Activated CD8-positive, alpha-beta T cell treated with anti-CD3 and anti-CD28 coated beads, Interleukin-2, amount 10 ng/mL, durations not matched to agents 7 days and 5 days (primary cell): ENCODE measurements at regions of chr19 and their contacts with region 1.

Region 1: GRCh38 chr19:16382775-16383543 is 58.3 kb downstream of the KLF2 start:
- DNase-seq: peak; percentile 86
- ATAC-seq: peak; percentile 78
- H3K4me3 Mint-ChIP-seq: peak overlapping the region; percentile 31
- H3K27ac Mint-ChIP-seq: peak overlapping the region; percentile 79
- H3K4me1 Mint-ChIP-seq: peaks cover 49% of the 10 kb centered on the region
- H3K27me3 Mint-ChIP-seq: no peaks in the 10 kb centered on the region

Region 2: DNA sequence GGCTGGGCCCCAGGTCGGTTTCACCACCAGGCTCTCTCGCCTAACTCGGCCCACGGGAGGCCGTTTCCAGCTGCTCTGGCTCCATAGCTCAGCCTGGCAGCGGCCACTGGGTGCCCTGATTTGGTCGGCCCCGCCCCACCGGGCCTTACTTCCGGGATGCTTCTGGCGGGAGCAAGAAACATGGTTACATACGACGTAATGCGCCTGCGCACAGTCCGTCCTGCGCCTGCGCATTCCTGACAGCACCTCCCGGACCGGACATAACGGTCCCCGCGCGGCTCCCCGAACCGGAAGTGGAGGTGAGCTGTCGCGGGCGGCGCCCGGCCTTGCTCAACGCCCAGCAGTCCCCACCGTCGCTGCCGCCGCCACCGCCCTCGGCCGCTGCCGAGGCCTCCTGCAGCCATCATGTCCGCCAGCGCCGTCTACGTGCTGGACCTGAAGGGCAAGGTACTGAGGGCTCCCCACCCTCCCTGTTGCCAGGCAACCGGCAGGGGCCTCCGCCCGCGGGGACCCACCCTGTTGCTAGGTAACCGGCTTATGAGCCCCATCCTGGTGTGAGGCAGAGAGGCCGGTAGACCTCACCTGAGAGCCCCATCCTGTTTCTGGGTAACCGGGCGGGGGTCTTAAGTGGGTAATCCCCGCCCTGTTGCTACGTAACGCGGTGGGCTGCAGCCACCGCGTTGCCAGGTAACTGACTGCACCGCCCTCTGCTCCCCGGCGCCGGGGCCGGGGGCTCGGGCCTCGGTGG is 185.2 kb before region 1 on chr19 and contains the start of gene AP1M1:
- CTCF ChIA-PET with region 1: interaction called, 15 read pairs
- POLR2A ChIA-PET with region 1: interaction called, 3 read pairs
- DNase-seq: peak; percentile 99
- ATAC-seq: peak; percentile 93
- H3K4me3 Mint-ChIP-seq: peak within 1 kb of the TSS; percentile 97
- H3K27ac Mint-ChIP-seq: peak within 1 kb of the TSS; percentile 95
- H3K4me1 Mint-ChIP-seq: peaks cover 52% of the 10 kb centered on the region
- H3K27me3 Mint-ChIP-seq: no peaks in the 10 kb centered on the region
- total RNA-seq, gene AP1M1: 184 to 186 TPM

Region 3: GRCh38 chr19:16262618-16263017 is 120.3 kb before region 1 on chr19:
- CTCF ChIA-PET with region 1: interaction called, 13 read pairs
- POLR2A ChIA-PET with region 1: no interaction called
- DNase-seq: no peak
- ATAC-seq: no peak
- H3K4me3 Mint-ChIP-seq: peak overlapping the region; percentile 63
- H3K27ac Mint-ChIP-seq: peak overlapping the region; percentile 87
- H3K4me1 Mint-ChIP-seq: peaks cover 85% of the 10 kb centered on the region
- H3K27me3 Mint-ChIP-seq: peaks cover 24% of the 10 kb centered on the region

Region 4: DNA sequence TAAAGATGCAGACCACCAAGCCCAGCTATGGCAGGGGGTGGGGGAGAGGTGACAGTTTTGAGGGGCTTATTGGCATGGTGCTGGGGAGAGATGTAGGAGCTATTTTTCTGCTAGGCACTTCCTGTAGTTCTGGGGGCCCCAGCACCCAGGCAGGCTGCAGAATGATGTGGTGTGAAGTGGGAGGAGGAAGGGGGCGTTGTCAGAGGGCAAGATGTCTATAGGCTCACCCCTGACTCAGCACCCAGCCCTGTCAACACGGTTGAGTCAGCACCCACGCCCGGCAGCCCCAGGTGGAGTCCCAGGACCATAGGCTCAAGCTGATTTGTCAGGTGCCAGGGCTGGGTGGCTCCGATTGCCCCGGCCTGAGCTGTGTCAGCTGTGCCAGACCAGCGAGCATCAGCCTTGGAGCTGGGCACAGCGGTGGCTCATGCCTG is 52.6 kb before region 1 on chr19:
- CTCF ChIA-PET with region 1: interaction called, 70 read pairs
- POLR2A ChIA-PET with region 1: interaction called, 556 read pairs
- DNase-seq: peak; percentile 94
- ATAC-seq: peak; percentile 69
- H3K4me3 Mint-ChIP-seq: peak overlapping the region; percentile 91
- H3K27ac Mint-ChIP-seq: peak overlapping the region; percentile 82
- H3K4me1 Mint-ChIP-seq: peaks cover 64% of the 10 kb centered on the region
- H3K27me3 Mint-ChIP-seq: peaks cover 25% of the 10 kb centered on the region

Region 5: DNA sequence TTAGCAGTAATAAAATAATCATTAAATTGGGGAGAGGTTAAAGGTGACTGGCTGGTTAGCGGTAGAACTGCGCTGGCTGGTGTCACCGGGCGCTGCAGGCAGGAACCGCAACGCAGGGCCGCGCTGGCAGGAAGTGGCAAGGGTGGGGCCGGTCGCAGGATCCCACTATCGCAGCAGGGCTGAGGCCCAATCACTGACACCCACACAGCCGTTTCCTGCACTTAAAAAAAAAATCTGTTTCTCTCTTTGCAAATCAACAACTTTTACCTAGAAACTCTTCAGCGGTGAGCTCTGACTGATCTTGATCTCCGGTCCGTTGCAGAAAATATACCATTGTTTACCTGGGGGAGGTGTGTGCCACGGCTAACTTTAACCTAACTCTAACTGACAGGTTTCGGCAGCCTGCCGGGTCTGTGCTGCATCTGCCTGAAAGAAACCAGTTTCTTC is 11.4 kb before region 1 on chr19:
- CTCF ChIA-PET with region 1: interaction called, 48 read pairs
- POLR2A ChIA-PET with region 1: interaction called, 20 read pairs
- DNase-seq: peak; percentile 96
- ATAC-seq: peak; percentile 70
- H3K4me3 Mint-ChIP-seq: no peak overlapping the region
- H3K27ac Mint-ChIP-seq: no peak overlapping the region
- H3K4me1 Mint-ChIP-seq: peaks cover 40% of the 10 kb centered on the region
- H3K27me3 Mint-ChIP-seq: peaks cover 3% of the 10 kb centered on the region